ENCODE measurements at regions of chr6 and their contacts with region 1.

Region 1: DNA sequence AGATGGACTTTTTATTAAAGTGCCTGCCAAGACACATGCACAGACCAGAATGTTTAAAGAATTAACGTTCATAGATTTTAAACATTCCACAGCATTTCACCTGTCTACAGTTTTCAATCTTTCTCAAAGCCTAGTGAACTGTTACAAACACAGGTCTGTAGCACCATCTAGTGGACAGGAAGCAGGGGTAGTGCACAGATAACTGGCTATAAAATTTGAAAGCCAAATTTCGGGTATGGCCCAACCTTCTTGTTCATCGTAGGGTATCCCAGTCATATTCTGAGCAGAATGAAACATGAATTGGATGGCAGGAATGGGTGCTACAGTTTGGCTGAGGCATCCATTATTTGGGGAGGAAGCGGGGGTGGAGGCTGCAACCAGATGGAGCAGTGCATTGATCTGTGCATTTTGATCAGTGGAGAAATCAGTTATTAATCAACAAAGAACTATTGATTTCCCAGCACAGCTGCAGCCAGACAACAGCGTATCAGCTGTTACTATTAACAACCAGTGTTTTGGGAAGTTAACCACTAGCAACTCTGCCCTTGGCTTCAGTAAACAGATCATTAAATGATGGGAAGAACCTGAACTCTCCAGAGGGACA is 56.1 kb upstream of the B3GAT2 start:
- DNase-seq: peak in 1 of 2 experiments; percentile 14
- H3K4me3 ChIP-seq: no peak overlapping the region
- H3K27ac ChIP-seq: no peak overlapping the region
- H3K4me1 ChIP-seq: no peaks in the 10 kb centered on the region
- H3K27me3 ChIP-seq: no peaks in the 10 kb centered on the region
- CTCF ChIP-seq: peak; percentile 86

Region 2: GRCh38 chr6:70310063-70310694 is 702.8 kb before region 1 on chr6:
- CTCF ChIA-PET with region 1: no interaction called
- POLR2A ChIA-PET with region 1: no interaction called
- intact Hi-C with region 1: loop called (anchors 1 kb)
- DNase-seq: peak in 1 of 2 experiments; percentile 48
- H3K4me3 ChIP-seq: no peak overlapping the region
- H3K27ac ChIP-seq: no peak overlapping the region
- H3K4me1 ChIP-seq: no peaks in the 10 kb centered on the region
- H3K27me3 ChIP-seq: peaks cover 49% of the 10 kb centered on the region
- CTCF ChIP-seq: peak; percentile 78

Region 3: GRCh38 chr6:70706491-70707123 is 306.4 kb before region 1 on chr6:
- CTCF ChIA-PET with region 1: no interaction called
- POLR2A ChIA-PET with region 1: no interaction called
- intact Hi-C with region 1: loop called (anchors 2 kb)
- DNase-seq: no peak
- H3K4me3 ChIP-seq: no peak overlapping the region
- H3K27ac ChIP-seq: no peak overlapping the region
- H3K4me1 ChIP-seq: peaks cover 10% of the 10 kb centered on the region; the same call in 1 of the 2 replicates
- H3K27me3 ChIP-seq: no peaks in the 10 kb centered on the region
- CTCF ChIP-seq: peak; percentile 82

Region 4: DNA sequence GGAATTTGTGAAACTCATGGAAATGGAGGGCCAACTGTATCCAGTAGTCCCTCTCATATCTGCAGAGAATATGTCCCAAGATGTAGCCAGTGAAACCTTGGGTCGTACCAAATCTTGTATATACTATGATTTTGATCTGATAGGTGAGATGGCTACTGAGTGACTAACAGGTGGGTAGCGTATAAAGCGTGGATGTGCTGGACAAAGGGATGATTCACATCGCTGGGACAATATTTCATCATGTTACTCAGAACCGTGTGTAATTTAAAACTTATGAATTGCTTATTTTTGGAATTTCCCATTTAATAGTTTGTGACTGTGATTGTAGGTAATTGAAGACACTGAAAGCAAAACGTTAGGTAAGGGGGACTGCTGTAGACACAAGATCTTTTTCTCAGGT is 201.2 kb before region 1 on chr6:
- CTCF ChIA-PET with region 1: no interaction called
- POLR2A ChIA-PET with region 1: no interaction called
- intact Hi-C with region 1: no loop called
- DNase-seq: no peak
- H3K4me3 ChIP-seq: no peak overlapping the region
- H3K27ac ChIP-seq: no peak overlapping the region
- H3K4me1 ChIP-seq: no peaks in the 10 kb centered on the region
- H3K27me3 ChIP-seq: no peaks in the 10 kb centered on the region
- CTCF ChIP-seq: no peak

Region 5: GRCh38 chr6:70957284-70957617 is 55.7 kb before region 1 on chr6:
- CTCF ChIA-PET with region 1: no interaction called
- POLR2A ChIA-PET with region 1: no interaction called
- intact Hi-C with region 1: no loop called
- DNase-seq: no peak
- H3K4me3 ChIP-seq: no peak overlapping the region
- H3K27ac ChIP-seq: no peak overlapping the region
- H3K4me1 ChIP-seq: no peaks in the 10 kb centered on the region
- H3K27me3 ChIP-seq: peaks cover 12% of the 10 kb centered on the region
- CTCF ChIP-seq: no peak

Region 6: DNA sequence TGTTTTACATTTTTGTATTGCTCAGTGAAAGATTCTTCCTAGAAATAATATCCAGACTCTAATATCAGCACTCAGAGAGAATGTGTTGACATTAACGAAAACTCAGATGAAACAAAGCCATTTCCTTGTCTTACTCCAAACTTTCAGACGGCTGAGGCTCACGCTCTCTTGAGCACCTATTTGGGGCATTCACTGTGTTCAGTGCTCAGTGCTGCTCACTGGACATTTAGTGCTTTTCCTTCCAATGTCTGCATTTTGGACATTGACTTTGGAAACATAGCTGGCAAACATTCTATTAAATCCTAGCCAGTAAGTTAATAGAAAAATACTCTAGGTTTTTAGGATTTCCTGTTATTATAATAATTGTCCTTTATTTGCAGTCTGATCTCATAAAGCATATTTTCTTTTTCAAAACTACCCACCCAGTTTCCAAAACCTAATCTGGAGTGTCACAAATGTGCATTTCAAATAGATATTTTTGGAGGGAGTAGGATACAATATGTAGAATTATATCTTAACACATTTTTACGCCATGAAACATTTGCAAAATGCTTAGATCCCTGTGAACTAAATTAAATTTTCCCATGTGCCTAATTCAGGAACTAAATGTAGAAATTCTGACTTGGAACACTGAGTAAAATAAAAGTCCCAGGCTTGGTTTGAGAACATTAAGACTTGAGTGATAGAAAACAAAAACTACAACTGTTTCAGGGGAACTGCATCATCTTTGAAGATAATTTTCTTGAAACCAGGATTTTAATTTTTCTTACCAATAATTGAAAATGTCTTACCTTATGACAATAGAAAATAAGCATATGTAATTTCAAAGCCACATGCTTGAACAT is 35.6 kb after region 1 on chr6:
- CTCF ChIA-PET with region 1: no interaction called
- POLR2A ChIA-PET with region 1: no interaction called
- intact Hi-C with region 1: no loop called
- DNase-seq: no peak
- H3K4me3 ChIP-seq: no peak overlapping the region
- H3K27ac ChIP-seq: no peak overlapping the region
- H3K4me1 ChIP-seq: no peaks in the 10 kb centered on the region
- H3K27me3 ChIP-seq: no peaks in the 10 kb centered on the region
- CTCF ChIP-seq: no peak

Region 7: DNA sequence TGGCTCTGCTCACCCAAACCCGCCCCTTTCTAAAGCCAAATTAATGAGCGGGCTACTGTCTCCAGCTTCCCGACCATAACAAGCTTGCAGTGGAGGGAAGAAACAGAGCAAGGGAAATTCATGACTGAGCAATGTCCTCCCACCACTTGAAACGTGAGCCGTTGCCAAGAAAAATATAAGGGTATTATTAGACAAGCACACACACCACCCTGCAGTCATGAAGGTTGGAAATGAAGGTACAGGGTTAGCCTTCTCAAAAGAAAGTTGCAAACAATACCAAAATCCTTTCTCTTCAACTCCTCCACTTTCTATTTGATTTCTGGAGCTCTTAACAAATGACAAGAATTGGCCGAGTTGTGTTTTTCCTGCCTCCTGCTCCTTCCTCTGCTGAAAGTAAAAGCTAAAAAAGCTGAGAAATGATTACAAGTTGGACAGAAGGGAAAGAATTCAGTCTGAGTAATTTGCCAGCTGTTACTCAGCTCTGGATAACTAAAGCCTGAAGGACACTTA is 95.0 kb after region 1 on chr6:
- CTCF ChIA-PET with region 1: no interaction called
- POLR2A ChIA-PET with region 1: no interaction called
- intact Hi-C with region 1: no loop called
- DNase-seq: no peak
- H3K4me3 ChIP-seq: no peak overlapping the region
- H3K27ac ChIP-seq: no peak overlapping the region
- H3K4me1 ChIP-seq: no peaks in the 10 kb centered on the region
- H3K27me3 ChIP-seq: no peaks in the 10 kb centered on the region
- CTCF ChIP-seq: no peak

Region 8: DNA sequence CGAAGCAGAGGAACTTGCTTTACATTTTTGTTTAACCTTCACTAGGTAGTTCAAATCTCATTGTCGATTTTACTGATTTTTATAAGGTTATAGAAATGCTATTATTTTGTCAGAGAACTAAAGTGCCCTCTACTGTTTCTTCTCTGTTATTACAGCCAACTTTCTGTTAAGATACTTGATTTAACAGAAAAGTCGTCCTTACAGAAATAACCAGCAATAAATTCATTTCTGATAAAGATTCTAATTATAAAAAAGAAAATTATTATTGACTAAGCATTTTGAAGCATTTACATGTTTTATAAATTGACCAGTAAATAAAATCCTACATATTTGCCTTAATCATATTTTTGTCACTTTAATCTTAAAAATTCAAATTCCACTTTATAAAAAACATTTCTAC is 336.4 kb after region 1 on chr6:
- CTCF ChIA-PET with region 1: no interaction called
- POLR2A ChIA-PET with region 1: interaction called, 4 read pairs
- intact Hi-C with region 1: loop called (anchors 5 kb)
- DNase-seq: peak in 1 of 2 experiments; percentile 45
- H3K4me3 ChIP-seq: no peak overlapping the region
- H3K27ac ChIP-seq: no peak overlapping the region
- H3K4me1 ChIP-seq: no peaks in the 10 kb centered on the region
- H3K27me3 ChIP-seq: no peaks in the 10 kb centered on the region
- CTCF ChIP-seq: peak; percentile 86

Measured in PC-9 (cell line).